MCF 10A (cell line): ENCODE measurements at regions of chr15 and their contacts with region 1.

Region 1: DNA sequence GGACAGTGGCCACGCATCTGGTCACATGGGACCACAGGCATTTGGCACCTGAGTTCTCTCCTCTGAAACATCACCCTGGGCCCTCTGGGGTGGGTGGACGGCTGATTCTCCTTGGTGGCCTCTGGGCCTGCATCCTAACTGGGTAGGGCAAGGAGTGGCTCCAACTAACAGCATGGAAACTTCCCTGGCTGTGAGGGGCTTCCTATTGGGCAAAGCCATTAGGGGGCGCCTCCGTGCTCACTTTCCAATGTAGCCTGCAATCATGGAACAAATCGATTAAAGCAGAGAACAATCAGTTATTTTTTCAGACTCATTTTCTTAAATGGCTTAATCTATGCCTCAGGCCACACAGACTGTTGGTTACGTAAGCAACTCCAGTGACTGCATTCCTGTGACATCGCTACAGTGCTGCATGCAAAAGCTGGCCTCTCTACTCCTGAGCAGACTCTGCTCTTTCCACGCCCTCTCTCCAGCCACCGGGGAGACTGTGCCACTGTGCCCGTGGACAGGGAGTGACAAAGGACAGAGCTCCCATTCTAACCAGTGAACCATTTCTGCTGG is 278.8 kb downstream of the KLF13 start:
- DNase-seq: peak; percentile 46
- H3K4me3 Mint-ChIP-seq: peak overlapping the region; percentile 17
- H3K27ac Mint-ChIP-seq: peak overlapping the region; percentile 50
- H3K4me1 Mint-ChIP-seq: peaks cover 45% of the 10 kb centered on the region
- H3K27me3 Mint-ChIP-seq: no peaks in the 10 kb centered on the region
- CTCF ChIP-seq: no peak

Region 2: GRCh38 chr15:30903497-30904201 is 701.8 kb before region 1 on chr15 and contains the start of gene FAN1:
- CTCF ChIA-PET with region 1: no interaction called
- POLR2A ChIA-PET with region 1: no interaction called
- intact Hi-C with region 1: loop called (anchors 10 kb)
- DNase-seq: peak; percentile 91
- H3K4me3 Mint-ChIP-seq: peak within 1 kb of the TSS; percentile 99
- H3K27ac Mint-ChIP-seq: peak within 1 kb of the TSS; percentile 93
- H3K4me1 Mint-ChIP-seq: peaks cover 13% of the 10 kb centered on the region
- H3K27me3 Mint-ChIP-seq: no peaks in the 10 kb centered on the region
- CTCF ChIP-seq: no peak
- total RNA-seq, gene FAN1: 22.4 and 29.8 TPM in 2 replicates

Region 3: DNA sequence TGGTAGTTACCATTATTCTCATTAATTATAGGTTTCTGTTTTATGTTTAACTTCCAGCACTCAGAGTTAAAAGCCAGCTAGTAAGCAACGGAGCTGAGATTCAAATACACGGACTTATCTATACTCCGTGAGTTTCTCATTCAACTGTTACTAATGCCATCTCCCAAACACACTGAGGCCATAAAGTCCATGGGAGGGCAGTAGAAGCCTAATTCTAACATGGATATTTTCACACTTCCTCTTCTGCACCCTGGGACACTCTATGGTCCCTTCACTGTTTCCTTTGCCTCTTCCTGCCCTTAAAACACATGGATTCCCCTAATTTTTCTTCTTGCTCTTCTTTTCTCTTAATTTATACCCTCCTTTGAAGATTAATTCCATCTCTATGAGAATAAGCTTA is 33.8 kb before region 1 on chr15:
- CTCF ChIA-PET with region 1: interaction called, 10 read pairs
- POLR2A ChIA-PET with region 1: no interaction called
- intact Hi-C with region 1: no loop called
- DNase-seq: peak; percentile 41
- H3K4me3 Mint-ChIP-seq: no peak overlapping the region
- H3K27ac Mint-ChIP-seq: no peak overlapping the region
- H3K4me1 Mint-ChIP-seq: peaks cover 5% of the 10 kb centered on the region
- H3K27me3 Mint-ChIP-seq: no peaks in the 10 kb centered on the region
- CTCF ChIP-seq: peak; percentile 42

Region 4: DNA sequence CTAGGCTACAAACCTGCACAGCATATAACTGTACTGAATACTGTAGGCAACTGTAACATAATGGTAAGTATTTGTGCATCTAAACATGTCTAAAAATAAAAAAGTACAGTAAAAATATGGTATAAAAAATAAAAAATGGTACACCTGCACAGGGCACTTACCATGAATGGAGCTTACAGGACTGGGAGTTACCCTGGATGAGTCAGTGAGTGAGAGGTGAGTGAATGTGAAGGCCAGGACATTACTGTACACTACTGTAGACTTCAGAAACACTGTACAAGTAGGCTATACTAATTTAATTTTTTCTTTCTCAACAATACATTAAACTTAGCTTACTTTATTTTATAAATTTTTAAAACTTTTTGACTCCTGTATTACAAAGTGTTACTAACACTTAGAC is 13.5 kb before region 1 on chr15:
- CTCF ChIA-PET with region 1: interaction called, 5 read pairs
- POLR2A ChIA-PET with region 1: interaction called, 10 read pairs
- intact Hi-C with region 1: no loop called
- DNase-seq: no peak
- H3K4me3 Mint-ChIP-seq: no peak overlapping the region
- H3K27ac Mint-ChIP-seq: no peak overlapping the region
- H3K4me1 Mint-ChIP-seq: peaks cover 2% of the 10 kb centered on the region
- H3K27me3 Mint-ChIP-seq: no peaks in the 10 kb centered on the region
- CTCF ChIP-seq: no peak